ENCODE measurements at regions of chr10 and their contacts with region 1.

Region 1: GRCh38 chr10:15433850-15434537 is 62.9 kb upstream of the FAM171A1 start:
- DNase-seq: no peak
- ATAC-seq: peak in 3 of 4 donors; percentile 46 to 77 (median 67)
- H3K4me3 ChIP-seq: peak overlapping the region; percentile 51
- H3K27ac ChIP-seq: no peak overlapping the region
- H3K4me1 ChIP-seq: no peaks in the 10 kb centered on the region
- H3K27me3 ChIP-seq: no peaks in the 10 kb centered on the region
- CTCF ChIP-seq: peak; percentile 75

Region 2: GRCh38 chr10:15411010-15411409 is 23.0 kb before region 1 on chr10:
- intact Hi-C with region 1: no loop called
- DNase-seq: no peak
- ATAC-seq: no peak
- H3K4me3 ChIP-seq: no peak overlapping the region
- H3K27ac ChIP-seq: no peak overlapping the region
- H3K4me1 ChIP-seq: no peaks in the 10 kb centered on the region
- H3K27me3 ChIP-seq: no peaks in the 10 kb centered on the region
- CTCF ChIP-seq: no peak

Region 3: DNA sequence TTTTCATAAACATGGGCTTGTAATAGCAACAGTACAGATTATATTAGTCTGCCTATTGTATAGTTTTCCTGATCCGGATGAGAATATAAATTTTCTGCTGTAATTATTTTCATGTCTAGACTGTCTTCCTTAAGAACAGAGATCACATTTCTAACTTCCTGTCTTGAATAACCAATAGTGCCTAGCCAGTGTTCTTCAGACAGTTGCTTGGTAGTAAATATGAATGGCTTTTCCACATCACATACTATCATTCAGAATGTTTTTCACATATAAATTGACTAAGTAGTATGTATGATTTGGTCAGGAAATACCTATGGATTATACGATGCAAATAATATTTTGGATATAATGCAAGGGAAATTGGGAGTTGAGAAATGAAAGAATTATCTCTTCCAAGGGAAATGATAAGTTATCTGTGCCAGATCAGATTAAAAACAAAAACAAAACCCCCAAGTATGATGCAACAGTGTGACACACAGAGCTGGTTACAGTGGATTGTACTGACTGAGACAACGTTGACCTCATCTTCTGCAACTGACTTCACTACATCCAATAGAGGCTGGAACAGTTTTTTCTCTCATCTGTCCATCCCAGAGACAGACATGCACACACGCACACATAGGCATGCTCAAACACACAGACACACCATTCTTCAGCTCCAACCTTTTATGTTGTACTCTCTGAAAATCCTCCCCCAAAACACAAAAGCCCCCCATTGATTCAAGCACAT is 269.3 kb after region 1 on chr10:
- intact Hi-C with region 1: no loop called
- DNase-seq: no peak
- ATAC-seq: no peak
- H3K4me3 ChIP-seq: no peak overlapping the region
- H3K27ac ChIP-seq: no peak overlapping the region
- H3K4me1 ChIP-seq: no peaks in the 10 kb centered on the region
- H3K27me3 ChIP-seq: no peaks in the 10 kb centered on the region
- CTCF ChIP-seq: no peak

Region 4: GRCh38 chr10:15725603-15726002 is 291.6 kb after region 1 on chr10:
- intact Hi-C with region 1: loop called in 1 of 2 experiments (anchors 2 kb)
- DNase-seq: no peak
- ATAC-seq: peak in 1 of 4 donors; percentile 44
- H3K4me3 ChIP-seq: no peak overlapping the region
- H3K27ac ChIP-seq: no peak overlapping the region
- H3K4me1 ChIP-seq: no peaks in the 10 kb centered on the region
- H3K27me3 ChIP-seq: peaks cover 0 to 6% (median 0%) of the 10 kb centered on the region in 3 donors
- CTCF ChIP-seq: peak; percentile 39